OCI-LY7 (cell line): ENCODE measurements at regions of chr11 and their contacts with region 1.

Region 1: DNA sequence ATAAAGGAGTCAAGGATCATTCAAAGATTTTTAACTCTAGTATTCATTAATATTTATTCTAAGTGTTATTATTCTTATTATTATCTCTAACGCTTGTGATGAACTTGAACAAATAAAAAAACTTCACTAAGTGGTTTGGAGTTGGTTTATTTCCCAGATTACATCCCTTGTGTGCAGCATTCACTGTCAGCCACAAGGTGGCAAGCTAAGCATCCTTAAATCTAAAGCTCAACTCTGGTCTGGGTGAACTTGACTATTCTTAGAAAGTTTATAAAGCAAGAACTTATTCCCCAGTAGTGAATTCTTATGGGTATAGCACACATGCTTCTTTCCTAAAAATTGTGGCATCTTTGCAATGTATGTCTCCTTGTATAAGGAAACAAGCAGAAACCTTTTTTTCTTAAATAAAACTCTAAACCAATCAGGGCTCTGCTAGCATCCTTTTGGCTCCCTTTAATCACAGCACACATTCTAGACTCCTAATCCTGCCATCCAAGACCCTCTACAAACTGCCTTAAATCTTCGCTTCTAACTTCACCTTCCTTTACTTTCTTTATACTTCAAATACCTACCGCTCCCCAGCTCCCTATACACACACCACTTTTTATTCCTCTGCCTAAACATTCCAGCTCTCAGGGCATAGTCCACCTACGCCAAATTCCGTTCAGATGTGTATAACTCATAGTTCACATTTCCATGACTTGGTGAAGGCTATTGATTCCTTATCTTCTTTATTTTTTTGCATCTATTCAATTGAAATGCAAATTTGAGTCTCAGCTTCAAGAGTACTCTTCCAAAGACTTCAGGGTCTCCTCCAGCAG is 1068.8 kb downstream of the DLG2 start:
- DNase-seq: peak; percentile 74
- H3K4me3 ChIP-seq: no peak overlapping the region
- H3K27ac ChIP-seq: no peak overlapping the region
- H3K4me1 ChIP-seq: no peaks in the 10 kb centered on the region
- CTCF ChIP-seq: peak; percentile 88

Region 2: GRCh38 chr11:84714316-84714780 is 156.1 kb after region 1 on chr11:
- CTCF ChIA-PET with region 1: no interaction called
- POLR2A ChIA-PET with region 1: no interaction called
- intact Hi-C with region 1: loop called (anchors 1 kb)
- DNase-seq: peak; percentile 71
- H3K4me3 ChIP-seq: no peak overlapping the region
- H3K27ac ChIP-seq: no peak overlapping the region
- H3K4me1 ChIP-seq: no peaks in the 10 kb centered on the region
- CTCF ChIP-seq: peak; percentile 71